ENCODE measurements at regions of chr10 and their contacts with region 1.

Region 1: DNA sequence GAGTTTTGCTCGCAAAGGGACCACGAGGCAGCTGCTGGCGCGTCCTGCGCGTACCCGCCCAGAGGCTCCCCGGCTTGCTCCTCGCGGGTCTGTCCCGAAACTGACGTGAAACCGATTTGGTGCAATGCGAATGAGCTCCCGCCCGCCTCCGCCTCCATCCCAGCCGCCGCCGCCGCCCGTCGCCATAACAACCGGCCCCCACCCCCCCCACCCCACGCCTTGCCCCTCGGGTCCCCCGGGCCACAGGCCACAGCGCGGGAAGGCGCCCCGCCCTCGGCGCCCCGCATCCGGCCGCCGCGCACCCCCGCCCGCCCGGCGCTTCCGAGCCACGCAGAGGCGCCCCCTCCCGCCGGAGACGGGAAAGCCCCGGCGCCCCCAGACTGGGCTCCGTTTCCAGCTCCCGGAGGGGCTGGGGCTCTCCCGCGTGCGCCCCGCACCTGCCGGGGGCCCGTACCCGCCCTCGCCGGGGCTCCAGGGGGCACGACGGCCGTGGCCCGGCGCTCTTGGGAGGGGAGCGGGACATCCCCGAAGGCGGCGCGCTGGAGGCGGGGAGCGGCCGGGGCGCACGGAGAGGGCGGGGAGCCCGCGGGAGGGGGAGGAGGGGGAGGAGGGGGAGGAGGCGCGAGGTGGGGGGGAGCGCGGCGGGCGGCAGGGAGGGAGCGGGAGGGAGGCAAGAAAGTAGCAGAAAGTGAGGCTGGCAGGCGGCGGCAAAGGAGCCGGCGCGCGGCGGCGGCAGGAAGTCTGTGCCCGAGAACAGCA is at the start of gene CAMK1D:
- DNase-seq: peak; percentile 90
- H3K4me3 Mint-ChIP-seq: peak within 1 kb of the TSS; percentile 94
- H3K27ac Mint-ChIP-seq: peak within 1 kb of the TSS; percentile 88
- H3K4me1 Mint-ChIP-seq: peaks cover 45% of the 10 kb centered on the region
- H3K27me3 Mint-ChIP-seq: peaks cover 5% of the 10 kb centered on the region
- total RNA-seq, gene CAMK1D: 17.7 to 17.9 TPM

Region 2: GRCh38 chr10:12042797-12043651 is 306.0 kb before region 1 on chr10 and contains the start of gene UPF2:
- CTCF ChIA-PET with region 1: no interaction called
- POLR2A ChIA-PET with region 1: no interaction called
- intact Hi-C with region 1: loop called (anchors 10 kb)
- DNase-seq: peak; percentile 99
- H3K4me3 Mint-ChIP-seq: peak within 1 kb of the TSS; percentile 100
- H3K27ac Mint-ChIP-seq: peak within 1 kb of the TSS; percentile 98
- H3K4me1 Mint-ChIP-seq: peaks cover 32% of the 10 kb centered on the region
- H3K27me3 Mint-ChIP-seq: no peaks in the 10 kb centered on the region
- total RNA-seq, gene UPF2: 29.5 to 32.0 TPM

Region 3: GRCh38 chr10:12264204-12264940 is 84.7 kb before region 1 on chr10:
- CTCF ChIA-PET with region 1: interaction called, 5 read pairs
- POLR2A ChIA-PET with region 1: interaction called, 4 read pairs
- intact Hi-C with region 1: loop called (anchors 1 kb)
- DNase-seq: peak; percentile 87
- H3K4me3 Mint-ChIP-seq: peak overlapping the region; percentile 47
- H3K27ac Mint-ChIP-seq: peak overlapping the region; percentile 82
- H3K4me1 Mint-ChIP-seq: peaks cover 19% of the 10 kb centered on the region
- H3K27me3 Mint-ChIP-seq: no peaks in the 10 kb centered on the region

Region 4: DNA sequence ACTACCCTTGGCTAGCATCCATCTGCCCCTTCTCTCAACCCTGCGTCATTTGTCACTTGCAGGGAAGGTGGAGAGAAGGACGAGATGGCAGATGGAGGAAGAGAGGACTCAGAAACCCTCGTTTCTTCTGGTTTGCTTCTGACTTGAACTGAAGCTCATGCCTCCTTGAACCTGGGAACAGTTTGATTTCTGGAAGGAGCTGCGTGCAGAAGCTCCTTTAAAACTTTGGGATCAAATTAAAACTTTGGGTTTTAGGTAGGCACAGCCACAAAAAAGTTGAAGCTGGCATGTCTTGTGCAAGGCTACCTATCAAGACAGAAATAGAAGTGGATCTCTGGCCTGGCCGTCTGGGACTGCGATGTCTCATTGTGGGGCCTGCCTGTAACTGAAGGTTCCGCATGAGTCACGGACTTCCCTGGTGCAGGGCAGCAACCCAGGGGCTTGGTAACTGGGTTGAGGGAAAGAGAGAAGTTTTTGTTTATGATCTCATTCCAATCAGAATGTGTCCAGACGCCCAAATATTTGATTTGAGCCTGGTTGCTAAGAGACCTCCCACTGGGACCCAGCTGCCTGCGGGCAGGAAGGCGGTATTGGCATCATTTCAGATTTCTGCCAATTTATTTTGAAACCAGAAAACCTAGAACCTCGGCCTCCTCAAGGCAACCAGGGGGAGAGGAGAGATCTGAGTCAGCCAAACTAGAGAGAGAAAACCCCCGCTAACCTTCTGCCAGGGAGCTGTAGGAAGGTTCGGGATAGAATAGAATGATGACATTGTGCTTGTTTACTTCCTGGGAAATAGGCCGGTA is 15.5 kb before region 1 on chr10:
- CTCF ChIA-PET with region 1: no interaction called
- POLR2A ChIA-PET with region 1: interaction called, 9 read pairs
- intact Hi-C with region 1: loop called (anchors 2 kb)
- DNase-seq: peak; percentile 76
- H3K4me3 Mint-ChIP-seq: peak overlapping the region; percentile 28
- H3K27ac Mint-ChIP-seq: peak overlapping the region; percentile 60
- H3K4me1 Mint-ChIP-seq: peaks cover 18% of the 10 kb centered on the region
- H3K27me3 Mint-ChIP-seq: peaks cover 1% of the 10 kb centered on the region

Region 5: DNA sequence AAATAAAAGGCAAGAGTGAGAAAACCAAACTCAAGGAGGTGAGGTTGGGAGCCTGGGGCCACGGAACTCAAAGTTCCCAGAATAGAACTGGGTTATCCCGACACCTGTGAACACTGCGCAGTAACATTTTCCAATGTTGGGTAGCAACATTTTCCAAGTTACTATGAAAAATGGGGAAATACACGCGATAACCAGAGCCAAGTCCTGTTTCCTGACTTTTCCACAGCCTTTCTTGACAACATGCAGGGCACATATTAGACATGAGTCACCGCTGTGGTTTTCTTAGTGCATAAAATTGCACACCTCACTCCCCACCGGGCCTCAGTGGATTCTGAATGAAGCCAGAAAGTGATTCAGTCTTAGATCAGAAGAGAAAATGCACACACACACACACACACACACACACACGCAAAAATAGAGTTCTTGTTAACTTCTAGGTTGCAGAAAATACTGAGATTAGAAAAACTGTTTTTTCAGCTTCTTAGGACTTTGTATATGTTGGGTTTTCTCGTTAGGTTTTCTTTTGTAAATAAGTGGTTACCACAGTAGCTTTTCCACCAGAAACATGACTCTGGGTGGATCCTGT is 70.3 kb after region 1 on chr10:
- CTCF ChIA-PET with region 1: interaction called, 3 read pairs
- POLR2A ChIA-PET with region 1: no interaction called
- intact Hi-C with region 1: loop called (anchors 2 kb)
- DNase-seq: peak; percentile 89
- H3K4me3 Mint-ChIP-seq: peak overlapping the region; percentile 20
- H3K27ac Mint-ChIP-seq: peak overlapping the region; percentile 67
- H3K4me1 Mint-ChIP-seq: peaks cover 34% of the 10 kb centered on the region
- H3K27me3 Mint-ChIP-seq: no peaks in the 10 kb centered on the region

Region 6: GRCh38 chr10:12564173-12564572 is 215.1 kb after region 1 on chr10:
- CTCF ChIA-PET with region 1: no interaction called
- POLR2A ChIA-PET with region 1: no interaction called
- intact Hi-C with region 1: no loop called
- DNase-seq: no peak
- H3K4me3 Mint-ChIP-seq: no peak overlapping the region
- H3K27ac Mint-ChIP-seq: peak overlapping the region; percentile 32
- H3K4me1 Mint-ChIP-seq: peaks cover 32% of the 10 kb centered on the region
- H3K27me3 Mint-ChIP-seq: no peaks in the 10 kb centered on the region

Region 7: GRCh38 chr10:12656518-12657142 is 307.6 kb after region 1 on chr10:
- CTCF ChIA-PET with region 1: interaction called, 9 read pairs
- POLR2A ChIA-PET with region 1: no interaction called
- intact Hi-C with region 1: loop called (anchors 5 kb)
- DNase-seq: no peak
- H3K4me3 Mint-ChIP-seq: no peak overlapping the region
- H3K27ac Mint-ChIP-seq: no peak overlapping the region
- H3K4me1 Mint-ChIP-seq: peaks cover 29% of the 10 kb centered on the region
- H3K27me3 Mint-ChIP-seq: no peaks in the 10 kb centered on the region